Naive thymus-derived CD4-positive, alpha-beta T cell (primary cell): ENCODE measurements at regions of chr2 and their contacts with region 1.

Region 1: DNA sequence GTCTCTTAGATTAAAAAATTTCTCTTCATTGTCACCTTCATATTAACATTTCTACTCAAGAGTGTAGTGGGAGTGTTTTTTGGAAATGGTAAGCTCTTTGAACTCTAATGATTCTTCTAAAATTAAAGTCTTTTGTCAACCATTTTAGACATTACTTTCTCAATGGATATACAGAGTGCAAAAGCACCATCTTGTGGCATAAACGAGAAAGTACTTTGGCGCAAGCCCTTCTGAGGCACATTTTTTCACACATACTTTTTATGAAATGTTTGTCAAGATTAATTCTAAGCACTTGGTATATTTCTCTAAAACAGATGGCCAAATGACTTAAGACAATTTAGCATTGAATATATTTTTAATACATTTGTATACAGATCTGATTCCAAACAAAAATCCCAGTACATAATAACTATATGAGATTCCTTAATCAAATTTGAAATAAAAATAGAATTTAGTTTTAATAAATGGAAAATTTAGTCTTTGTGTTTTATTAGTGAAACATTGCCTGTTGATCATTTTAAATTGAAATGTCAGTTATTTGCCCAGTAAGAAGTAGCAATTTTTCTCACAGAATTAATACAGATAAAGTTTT is 63.3 kb upstream of the GALNT5 start:
- DNase-seq: peak in 5 of 9 donors; percentile 6 to 26 (median 15)
- ATAC-seq: peak; percentile 58
- H3K4me3 ChIP-seq: no peak overlapping the region
- H3K4me3 Mint-ChIP-seq: no peak overlapping the region
- H3K27ac ChIP-seq: no peak overlapping the region
- H3K27ac Mint-ChIP-seq: no peak overlapping the region
- H3K4me1 ChIP-seq: no peaks in the 10 kb centered on the region
- H3K4me1 Mint-ChIP-seq: peaks cover 0 to 6% (median 1%) of the 10 kb centered on the region in 7 donors
- H3K27me3 ChIP-seq: no peaks in the 10 kb centered on the region
- H3K27me3 Mint-ChIP-seq: peaks cover 0 to 10% (median 5%) of the 10 kb centered on the region in 5 donors

Region 2: DNA sequence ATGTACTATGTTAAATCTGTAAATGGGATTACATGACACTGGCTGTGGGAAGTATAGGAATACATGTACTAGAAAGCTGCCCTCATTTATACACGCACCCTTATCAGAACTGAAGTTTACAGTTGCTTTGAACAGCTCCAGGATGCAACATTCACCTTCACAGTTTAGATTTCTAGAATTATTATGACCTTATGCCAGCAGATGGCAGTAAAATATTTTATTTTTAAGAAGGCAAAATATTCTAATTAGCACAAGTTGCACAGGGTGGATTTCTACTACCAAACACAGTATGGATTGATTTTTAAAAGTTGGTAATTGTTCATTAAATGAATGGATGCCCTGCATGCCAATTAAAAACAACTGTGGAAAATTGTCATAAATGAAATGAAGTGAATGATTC is 1825.3 kb before region 1 on chr2:
- CTCF ChIA-PET with region 1: no interaction called
- POLR2A ChIA-PET with region 1: no interaction called
- intact Hi-C with region 1: loop called (anchors 1 to 2 kb)
- DNase-seq: peak in 2 of 9 donors; percentile 5 to 6
- ATAC-seq: no peak
- H3K4me3 ChIP-seq: no peak overlapping the region
- H3K4me3 Mint-ChIP-seq: no peak overlapping the region
- H3K27ac ChIP-seq: no peak overlapping the region
- H3K27ac Mint-ChIP-seq: no peak overlapping the region
- H3K4me1 ChIP-seq: no peaks in the 10 kb centered on the region
- H3K4me1 Mint-ChIP-seq: no peaks in the 10 kb centered on the region
- H3K27me3 ChIP-seq: no peaks in the 10 kb centered on the region
- H3K27me3 Mint-ChIP-seq: peaks cover 1 to 8% (median 6%) of the 10 kb centered on the region in 5 donors

Region 3: DNA sequence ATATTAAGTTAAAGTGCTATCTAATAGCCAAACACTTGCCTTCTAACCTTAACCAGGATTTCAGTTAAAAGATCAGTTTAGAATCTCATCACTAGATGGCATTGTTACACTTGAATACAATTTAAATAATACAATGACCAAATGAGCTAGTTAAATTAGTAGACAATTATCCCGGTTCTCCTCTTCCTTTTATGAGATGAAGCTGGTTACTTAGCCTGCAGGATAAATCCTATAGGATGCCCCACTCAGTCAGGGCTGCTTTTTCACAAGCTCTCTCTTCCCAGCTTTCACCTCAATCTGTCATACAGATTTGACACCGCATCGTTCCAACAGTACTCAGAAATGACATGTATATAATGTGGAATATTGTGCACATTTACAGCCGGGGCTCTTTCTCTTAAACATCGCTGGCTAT is 1816.9 kb before region 1 on chr2:
- CTCF ChIA-PET with region 1: interaction called, 10 read pairs
- POLR2A ChIA-PET with region 1: no interaction called
- intact Hi-C with region 1: loop called (anchors 1 kb)
- DNase-seq: no peak
- ATAC-seq: no peak
- H3K4me3 ChIP-seq: no peak overlapping the region
- H3K4me3 Mint-ChIP-seq: no peak overlapping the region
- H3K27ac ChIP-seq: no peak overlapping the region
- H3K27ac Mint-ChIP-seq: no peak overlapping the region
- H3K4me1 ChIP-seq: no peaks in the 10 kb centered on the region
- H3K4me1 Mint-ChIP-seq: peaks cover 0 to 4% (median 0%) of the 10 kb centered on the region in 7 donors
- H3K27me3 ChIP-seq: peaks cover 0 to 3% of the 10 kb centered on the region in 2 donors
- H3K27me3 Mint-ChIP-seq: peaks cover 0 to 8% (median 6%) of the 10 kb centered on the region in 5 donors